Endothelial cell of umbilical vein (primary cell): ENCODE measurements at regions of chr12 and their contacts with region 1.

Region 1: DNA sequence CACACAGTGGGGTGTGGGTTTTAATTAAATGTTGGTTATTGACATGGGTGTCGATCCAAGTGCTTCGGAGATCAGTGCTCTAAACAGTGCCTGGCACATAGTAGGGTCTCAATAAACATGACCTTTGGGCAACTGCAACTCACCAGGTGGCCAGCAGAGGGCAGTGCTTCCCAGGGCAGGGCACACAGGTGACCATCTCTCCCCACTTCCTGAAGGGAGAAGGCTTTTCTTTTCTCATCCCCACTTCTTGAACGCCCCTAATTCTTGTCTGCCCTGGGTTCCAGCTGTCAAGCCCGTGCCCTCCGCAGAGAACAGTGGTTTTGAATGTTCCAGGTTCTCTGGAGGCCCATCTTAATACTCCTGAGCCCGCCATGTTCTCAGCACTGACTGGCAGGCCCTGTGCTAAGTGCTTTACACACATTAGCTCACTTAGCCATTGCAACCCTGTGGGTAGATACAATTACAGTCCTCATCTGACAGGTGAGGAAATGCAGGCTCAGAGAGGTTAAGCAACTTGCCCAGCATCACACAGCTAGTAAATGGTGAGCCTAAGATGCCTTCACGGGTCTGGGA is 16.3 kb downstream of the RAPGEF3 start:
- DNase-seq: peak; percentile 51
- H3K4me3 ChIP-seq: no peak overlapping the region
- H3K27ac ChIP-seq: no peak overlapping the region
- H3K4me1 ChIP-seq: peaks cover 11% of the 10 kb centered on the region
- H3K27me3 ChIP-seq: no peaks in the 10 kb centered on the region
- CTCF ChIP-seq: peak; percentile 89 to 94
- POLR2A ChIP-seq: no peak

Region 2: DNA sequence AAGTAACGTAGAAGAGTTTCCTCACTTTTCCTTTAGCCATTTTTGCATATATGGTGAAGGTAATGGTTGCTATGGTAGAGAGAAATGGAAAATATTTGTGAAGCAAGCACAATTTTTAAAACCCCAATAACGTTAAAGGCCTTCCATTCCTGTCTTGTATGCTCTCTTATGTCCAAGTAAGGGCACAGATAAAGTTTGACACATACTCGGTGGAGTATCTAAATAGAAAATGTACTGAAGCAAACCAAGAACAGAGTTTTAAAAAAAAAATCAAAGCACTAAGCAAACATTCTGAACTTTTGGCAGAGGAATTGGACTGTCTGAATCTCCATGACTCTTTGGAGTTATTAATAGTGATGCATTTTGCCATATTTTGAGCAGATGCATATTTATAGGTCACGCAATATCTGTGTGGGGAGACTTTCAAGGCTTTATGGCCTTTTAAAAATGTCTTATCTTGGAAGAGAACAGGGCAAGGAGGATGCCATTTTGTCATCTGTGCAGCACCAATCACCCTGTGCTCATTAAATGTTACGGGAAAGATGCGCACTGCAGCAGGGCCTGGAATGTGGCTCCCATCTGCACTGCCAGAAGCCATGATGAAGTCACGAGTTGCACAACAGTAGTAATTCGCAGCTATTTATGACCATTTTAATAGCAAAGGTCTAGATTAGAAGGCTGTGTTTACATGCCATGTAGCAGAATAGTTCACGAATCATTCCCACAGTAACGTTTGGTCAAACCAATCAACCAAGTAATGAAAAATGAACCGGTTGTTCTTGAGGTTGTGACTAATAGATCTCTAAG is 639.3 kb before region 1 on chr12:
- CTCF ChIA-PET with region 1: no interaction called
- POLR2A ChIA-PET with region 1: no interaction called
- dilution Hi-C with region 1: no loop called
- intact Hi-C with region 1: no loop called
- DNase-seq: no peak
- H3K4me3 ChIP-seq: no peak overlapping the region
- H3K27ac ChIP-seq: no peak overlapping the region
- H3K4me1 ChIP-seq: no peaks in the 10 kb centered on the region
- H3K27me3 ChIP-seq: no peaks in the 10 kb centered on the region
- CTCF ChIP-seq: no peak
- POLR2A ChIP-seq: no peak

Region 3: DNA sequence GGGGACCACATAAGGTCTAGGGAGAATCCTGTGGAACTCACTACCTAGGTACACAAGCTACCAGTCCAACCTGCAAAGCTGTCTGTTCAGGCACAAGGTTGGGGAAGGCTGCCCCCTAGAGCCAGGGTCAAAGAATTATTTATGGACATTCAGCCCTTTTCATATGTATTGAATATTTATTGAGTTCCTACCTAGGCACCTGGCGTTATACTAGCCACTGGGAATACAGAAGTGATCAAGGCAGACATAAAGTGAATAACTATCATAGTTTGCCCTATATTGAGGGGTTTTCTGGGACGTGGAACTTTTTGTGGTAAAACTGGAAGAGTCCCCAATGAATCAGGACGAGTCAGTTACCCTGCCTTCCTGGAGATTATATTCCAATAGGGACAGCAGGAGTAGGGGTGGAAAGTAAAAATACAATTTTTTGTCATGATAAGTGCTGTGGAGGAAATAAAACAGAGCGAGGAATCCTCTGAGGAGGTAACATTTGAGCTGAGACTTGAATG is 24.9 kb after region 1 on chr12:
- CTCF ChIA-PET with region 1: interaction called, 385 read pairs
- POLR2A ChIA-PET with region 1: interaction called, 3 read pairs
- dilution Hi-C with region 1: no loop called
- intact Hi-C with region 1: loop called (anchors 1 kb)
- DNase-seq: peak; percentile 66
- H3K4me3 ChIP-seq: no peak overlapping the region
- H3K27ac ChIP-seq: no peak overlapping the region
- H3K4me1 ChIP-seq: peaks cover 6% of the 10 kb centered on the region
- H3K27me3 ChIP-seq: no peaks in the 10 kb centered on the region
- CTCF ChIP-seq: peak; percentile 64 to 66
- POLR2A ChIP-seq: no peak

Region 4: GRCh38 chr12:47773062-47773857 is 30.9 kb after region 1 on chr12 and contains the start of gene SLC48A1:
- CTCF ChIA-PET with region 1: interaction called, 385 read pairs
- POLR2A ChIA-PET with region 1: no interaction called
- dilution Hi-C with region 1: no loop called
- intact Hi-C with region 1: no loop called
- DNase-seq: peak; percentile 54
- H3K4me3 ChIP-seq: peak within 1 kb of the TSS; percentile 43 to 70 (median 57)
- H3K27ac ChIP-seq: no peak within 1 kb of the TSS
- H3K4me1 ChIP-seq: peaks cover 34% of the 10 kb centered on the region
- H3K27me3 ChIP-seq: no peaks in the 10 kb centered on the region
- CTCF ChIP-seq: peak; percentile 13 to 38
- POLR2A ChIP-seq: peak; percentile 53
- total RNA-seq, gene SLC48A1: 17.9 and 20.3 TPM in 2 replicates